PC-3 (cell line): ENCODE measurements at regions of chr14 and their contacts with region 1.

Region 1: DNA sequence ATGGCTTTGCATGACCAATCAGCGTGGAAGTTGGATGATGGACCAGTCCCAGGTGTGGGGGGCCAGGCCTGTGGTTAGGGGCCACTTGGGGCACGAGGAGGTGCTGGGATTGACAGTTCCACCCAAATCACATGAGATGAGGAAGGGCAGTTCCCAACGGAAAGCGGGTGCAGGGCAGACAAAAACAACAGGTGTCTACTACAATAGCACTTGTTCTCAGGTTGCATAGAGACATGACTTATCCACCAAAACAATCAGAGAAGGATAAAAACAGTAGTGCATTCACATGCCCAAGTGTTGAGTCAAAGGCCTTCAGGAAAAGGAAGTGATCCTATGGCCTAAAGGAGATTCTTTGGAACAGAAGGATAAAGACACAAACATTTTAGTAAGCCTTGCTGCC is 14.6 kb upstream of the EIF2B2 start:
- DNase-seq: peak; percentile 93
- ATAC-seq: peak; percentile 96
- H3K4me3 ChIP-seq: no peak overlapping the region
- H3K27ac ChIP-seq: peak overlapping the region; percentile 47
- H3K4me1 ChIP-seq: peaks cover 24% of the 10 kb centered on the region
- H3K27me3 ChIP-seq: no peaks in the 10 kb centered on the region
- CTCF ChIP-seq: no peak

Region 2: DNA sequence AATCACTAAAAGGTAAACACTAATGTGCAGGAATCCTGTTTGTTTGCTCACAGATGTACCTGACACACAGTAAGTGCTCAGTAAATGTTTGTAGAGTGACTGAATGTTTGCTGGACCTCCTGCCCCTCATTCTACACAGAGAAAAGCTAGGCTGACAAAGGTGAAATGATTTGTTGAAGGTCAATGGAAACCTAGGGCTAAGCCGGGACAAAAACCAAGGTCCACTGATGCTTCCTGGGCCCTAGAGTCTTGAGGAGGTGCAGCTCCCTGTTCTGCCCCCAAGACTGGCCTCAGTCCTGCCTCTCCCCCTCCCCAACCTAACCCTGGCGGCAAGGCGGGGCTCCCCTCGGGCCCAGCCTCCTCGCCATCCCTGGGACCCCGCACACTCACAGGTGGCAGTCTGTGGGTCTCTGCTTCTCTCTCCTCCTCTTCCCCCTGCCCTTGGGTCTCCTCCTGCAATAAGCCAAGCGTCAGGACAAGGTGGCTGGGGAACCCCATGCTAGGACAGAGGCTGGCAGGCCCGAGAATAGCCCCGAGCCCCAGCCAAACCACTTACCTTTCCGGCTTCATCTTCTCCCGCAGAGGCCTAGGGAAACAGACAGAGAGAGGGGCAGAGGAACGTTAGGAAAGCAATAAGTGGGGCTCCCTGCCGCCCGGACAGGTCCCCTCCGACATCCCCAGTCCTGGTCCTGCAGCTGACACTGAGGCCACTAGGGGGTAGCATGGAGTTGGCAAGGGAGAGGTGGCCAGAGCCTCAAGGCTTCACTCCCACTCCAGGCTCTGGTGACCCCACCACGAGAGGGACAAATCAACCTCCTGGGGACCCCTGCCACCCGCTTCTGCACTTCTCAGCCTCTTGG is 42.1 kb before region 1 on chr14:
- CTCF ChIA-PET with region 1: no interaction called
- POLR2A ChIA-PET with region 1: no interaction called
- intact Hi-C with region 1: loop called (anchors 2 kb)
- DNase-seq: peak; percentile 85
- ATAC-seq: peak; percentile 87
- H3K4me3 ChIP-seq: peak overlapping the region; percentile 6; the same call in 1 of the 2 replicates
- H3K27ac ChIP-seq: peak overlapping the region; percentile 71
- H3K4me1 ChIP-seq: peaks cover 15% of the 10 kb centered on the region
- H3K27me3 ChIP-seq: no peaks in the 10 kb centered on the region
- CTCF ChIP-seq: peak; percentile 95

Region 3: DNA sequence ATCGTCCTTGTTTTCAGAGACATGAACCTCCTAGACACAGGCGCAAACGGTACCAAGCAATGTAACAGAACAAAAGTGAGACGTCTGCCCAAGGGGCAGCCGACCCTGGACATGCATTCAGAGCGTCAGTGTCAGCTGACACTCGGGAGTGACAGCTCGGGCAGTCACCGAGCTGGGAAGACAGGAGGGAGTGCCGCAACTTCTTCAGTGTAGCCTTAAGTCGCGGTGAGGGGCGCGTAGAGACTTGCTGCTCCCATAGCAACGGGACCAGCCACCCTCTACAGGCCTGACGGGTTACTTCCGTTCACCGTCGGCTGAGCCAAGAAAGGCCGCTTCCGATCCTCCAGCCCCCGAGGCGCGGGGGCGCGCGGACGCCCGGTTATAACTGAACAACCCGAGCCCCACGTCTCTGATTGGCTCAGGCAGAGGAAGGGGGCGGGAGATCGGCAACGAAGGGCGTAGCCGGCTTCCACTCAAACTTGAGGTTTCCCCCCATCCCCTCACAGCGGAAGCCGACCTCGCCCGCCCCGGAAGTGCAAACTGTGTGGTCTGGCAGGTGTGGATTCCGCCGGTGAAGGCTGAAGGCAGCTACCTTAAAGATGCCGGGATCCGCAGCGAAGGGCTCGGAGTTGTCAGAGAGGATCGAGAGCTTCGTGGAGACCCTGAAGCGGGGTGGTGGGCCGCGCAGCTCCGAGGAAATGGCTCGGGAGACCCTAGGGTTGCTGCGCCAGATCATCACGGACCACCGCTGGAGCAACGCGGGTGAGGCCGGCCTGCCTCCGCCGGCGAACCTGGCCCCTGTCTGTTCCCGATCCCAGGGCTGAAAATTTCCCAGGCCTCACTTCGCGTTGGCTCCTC is 14.5 kb after region 1 on chr14 and contains the start of gene EIF2B2:
- CTCF ChIA-PET with region 1: interaction called, 3 read pairs
- POLR2A ChIA-PET with region 1: interaction called, 6 read pairs
- intact Hi-C with region 1: loop called (anchors 1 kb)
- DNase-seq: peak; percentile 97
- ATAC-seq: peak; percentile 98
- H3K4me3 ChIP-seq: peak within 1 kb of the TSS; percentile 89
- H3K27ac ChIP-seq: peak within 1 kb of the TSS; percentile 25
- H3K4me1 ChIP-seq: peaks cover 28% of the 10 kb centered on the region
- H3K27me3 ChIP-seq: no peaks in the 10 kb centered on the region
- CTCF ChIP-seq: no peak
- total RNA-seq, gene EIF2B2: 96.8 and 113 TPM in 2 replicates

Region 4: GRCh38 chr14:75011356-75011994 is 23.3 kb after region 1 on chr14:
- CTCF ChIA-PET with region 1: no interaction called
- POLR2A ChIA-PET with region 1: interaction called, 18 read pairs
- intact Hi-C with region 1: no loop called
- DNase-seq: peak; percentile 48
- ATAC-seq: peak; percentile 90
- H3K4me3 ChIP-seq: no peak overlapping the region
- H3K27ac ChIP-seq: peak overlapping the region; percentile 36
- H3K4me1 ChIP-seq: peaks cover 12% of the 10 kb centered on the region
- H3K27me3 ChIP-seq: no peaks in the 10 kb centered on the region
- CTCF ChIP-seq: no peak

Region 5: DNA sequence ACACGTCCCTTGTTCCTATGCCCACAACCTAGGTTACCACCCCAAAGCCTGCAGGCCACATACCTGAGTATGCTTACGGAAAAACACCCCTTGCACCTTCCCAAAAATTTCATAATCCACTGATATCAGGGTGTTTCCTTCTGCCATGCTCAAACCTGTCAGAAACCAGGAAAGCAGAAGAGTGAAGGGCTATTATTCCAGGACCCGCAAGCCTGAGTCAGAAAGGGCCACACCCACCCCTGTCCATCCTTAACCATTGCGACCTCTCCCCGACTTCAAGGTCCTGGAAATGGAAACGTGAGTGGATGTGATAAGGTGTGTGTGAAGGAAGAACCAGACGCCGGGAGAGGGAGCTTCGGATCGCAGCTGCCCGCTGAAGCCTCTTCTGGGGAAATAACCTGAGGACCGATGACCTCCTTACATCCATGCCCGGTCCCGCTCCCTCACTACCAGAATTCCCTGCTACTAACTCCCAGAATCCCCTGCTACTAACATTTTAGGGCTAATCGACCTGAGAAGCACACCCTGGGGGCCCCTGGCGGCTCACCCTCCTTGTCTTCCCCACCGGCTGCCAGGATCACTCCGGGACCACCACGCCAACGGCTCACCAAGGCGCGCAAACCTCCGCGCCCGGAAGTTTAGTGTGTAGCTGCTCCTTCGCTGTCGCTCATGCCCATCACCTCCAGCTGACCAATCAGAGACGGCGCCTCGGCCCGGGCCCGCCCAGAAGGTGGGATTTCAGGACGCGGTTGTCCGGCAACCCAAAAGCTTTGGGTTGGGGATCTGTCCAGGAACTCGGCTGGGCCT is 75.5 kb after region 1 on chr14 and contains the start of gene ACYP1:
- CTCF ChIA-PET with region 1: no interaction called
- POLR2A ChIA-PET with region 1: no interaction called
- intact Hi-C with region 1: loop called (anchors 5 kb)
- DNase-seq: peak; percentile 93
- ATAC-seq: peak; percentile 95
- H3K4me3 ChIP-seq: peak within 1 kb of the TSS; percentile 78
- H3K27ac ChIP-seq: peak within 1 kb of the TSS; percentile 59
- H3K4me1 ChIP-seq: peaks cover 15% of the 10 kb centered on the region
- H3K27me3 ChIP-seq: no peaks in the 10 kb centered on the region
- CTCF ChIP-seq: peak; percentile 17; the same call in 1 of the 2 replicates
- total RNA-seq, gene ACYP1: 22.6 and 23.5 TPM in 2 replicates